Activated CD8-positive, alpha-beta memory T cell treated with anti-CD3 and anti-CD28 coated beads, Interleukin-2, amount 10 ng/mL, durations not matched to agents 7 days and 5 days (primary cell): ENCODE measurements at regions of chr11 and their contacts with region 1.

Region 1: GRCh38 chr11:15146271-15147003 is 31.7 kb downstream of the INSC start:
- DNase-seq: no peak
- ATAC-seq: no peak
- H3K4me3 Mint-ChIP-seq: no peak overlapping the region
- H3K27ac Mint-ChIP-seq: no peak overlapping the region
- H3K4me1 Mint-ChIP-seq: peaks cover 12% of the 10 kb centered on the region
- H3K27me3 Mint-ChIP-seq: peaks cover 13% of the 10 kb centered on the region

Region 2: DNA sequence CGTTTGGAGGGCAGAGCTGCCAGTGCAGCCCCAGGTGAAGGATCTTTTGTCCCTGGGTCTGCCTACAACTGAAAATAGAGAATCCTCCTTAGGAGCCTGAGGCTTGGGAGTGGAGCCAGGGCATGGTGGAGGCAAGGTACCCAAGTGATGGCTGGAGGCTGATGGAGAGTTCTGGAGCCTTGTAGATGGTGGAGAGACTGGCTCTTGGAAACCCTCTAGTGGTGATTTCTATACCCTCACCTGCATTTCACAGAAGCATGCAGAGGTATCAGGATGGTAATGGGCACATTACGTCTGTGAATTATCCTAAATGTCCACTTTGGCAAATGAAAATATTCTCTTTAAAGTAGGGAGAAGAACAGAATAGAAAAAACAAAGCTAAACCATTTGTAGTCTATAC is 12.6 kb after region 1 on chr11:
- CTCF ChIA-PET with region 1: interaction called, 18 read pairs
- DNase-seq: no peak
- ATAC-seq: peak; percentile 45
- H3K4me3 Mint-ChIP-seq: no peak overlapping the region
- H3K27ac Mint-ChIP-seq: no peak overlapping the region
- H3K4me1 Mint-ChIP-seq: no peaks in the 10 kb centered on the region
- H3K27me3 Mint-ChIP-seq: peaks cover 14% of the 10 kb centered on the region